Heart right ventricle (tissue), 16 donors: ENCODE measurements at regions of chr12 and their contacts with region 1.

Region 1: DNA sequence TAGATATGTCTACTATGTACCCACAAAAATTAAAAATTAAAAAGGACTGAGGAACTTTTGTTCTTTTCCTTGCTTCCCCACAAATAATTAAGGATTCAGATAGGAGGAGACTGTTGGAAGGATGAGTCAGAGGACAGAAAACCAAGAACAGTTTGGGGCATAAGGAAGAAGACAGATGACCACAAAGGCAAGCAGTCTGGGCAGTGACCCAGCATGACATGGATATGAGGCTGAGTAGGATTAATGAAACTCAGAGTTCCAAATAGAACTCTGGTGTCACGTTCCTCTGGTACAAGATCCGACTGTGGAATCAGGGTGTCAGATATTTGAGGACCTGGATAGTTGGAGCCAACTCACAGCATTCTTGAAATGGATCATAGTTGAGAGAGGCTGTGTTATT is 89.3 kb upstream of the SLC38A4 start:
- DNase-seq: no peak
- ATAC-seq: peak in 4 of 8 donors; percentile 46 to 76 (median 65)
- H3K4me3 ChIP-seq: no peak overlapping the region
- H3K27ac ChIP-seq: no peak overlapping the region
- H3K4me1 ChIP-seq: peaks cover 0 to 10% (median 0%) of the 10 kb centered on the region in 9 donors
- H3K27me3 ChIP-seq: no peaks in the 10 kb centered on the region
- CTCF ChIP-seq: no peak

Region 2: DNA sequence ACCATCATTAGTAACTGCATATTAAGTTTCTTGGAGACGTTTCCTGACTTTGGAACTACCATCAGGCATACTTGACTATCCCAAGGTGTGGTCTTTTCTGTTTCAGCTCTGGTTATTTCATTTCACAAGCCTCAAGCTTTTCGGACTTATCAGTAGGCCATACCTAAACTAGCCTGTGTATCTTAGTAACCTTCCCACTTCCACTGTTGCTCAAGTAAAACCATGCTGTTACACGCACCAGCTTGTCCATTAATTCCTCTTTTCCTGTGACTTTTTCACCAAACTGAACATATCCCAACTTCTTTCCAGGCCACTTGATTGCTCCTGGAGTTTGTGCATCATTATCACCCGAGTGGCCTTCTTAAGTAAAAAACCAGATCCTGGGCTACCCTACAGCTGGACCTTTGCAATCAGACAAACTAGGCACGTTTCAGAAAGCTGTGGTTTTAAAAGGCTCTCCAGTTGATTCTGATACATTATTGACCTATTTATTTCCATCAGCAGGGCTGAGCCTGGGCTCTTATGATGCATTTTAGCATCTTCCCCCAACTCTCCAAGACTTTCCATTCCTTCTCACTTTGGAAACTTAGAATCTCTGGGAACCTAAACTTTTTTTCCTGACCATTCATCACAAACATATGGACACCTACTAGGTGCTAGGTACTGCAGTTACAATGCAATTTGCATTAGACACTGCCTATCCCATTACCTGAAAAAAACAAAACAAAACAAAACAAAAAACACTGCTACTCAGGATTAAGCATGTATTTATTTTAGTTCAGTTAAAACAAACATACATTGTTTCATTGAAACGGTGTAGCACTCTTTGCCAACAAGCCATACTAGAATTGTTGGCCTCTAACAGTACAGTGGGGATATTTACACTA is 557.4 kb before region 1 on chr12:
- intact Hi-C with region 1: no loop called
- DNase-seq: no peak
- ATAC-seq: peak in 6 of 8 donors; percentile 17 to 49 (median 30)
- H3K4me3 ChIP-seq: no peak overlapping the region
- H3K27ac ChIP-seq: no peak overlapping the region
- H3K4me1 ChIP-seq: peaks cover 0 to 36% (median 3%) of the 10 kb centered on the region in 9 donors
- H3K27me3 ChIP-seq: no peaks in the 10 kb centered on the region
- CTCF ChIP-seq: no peak

Region 3: GRCh38 chr12:46895726-46896125 is 19.4 kb before region 1 on chr12:
- intact Hi-C with region 1: loop called in 2 of 10 experiments (anchors 1 kb)
- DNase-seq: no peak
- ATAC-seq: no peak
- H3K4me3 ChIP-seq: no peak overlapping the region
- H3K27ac ChIP-seq: no peak overlapping the region
- H3K4me1 ChIP-seq: peaks cover 0 to 6% (median 0%) of the 10 kb centered on the region in 9 donors
- H3K27me3 ChIP-seq: no peaks in the 10 kb centered on the region
- CTCF ChIP-seq: no peak